Vagina (tissue), 2 donors: ENCODE measurements at regions of chr7 and their contacts with region 1.

Region 1: DNA sequence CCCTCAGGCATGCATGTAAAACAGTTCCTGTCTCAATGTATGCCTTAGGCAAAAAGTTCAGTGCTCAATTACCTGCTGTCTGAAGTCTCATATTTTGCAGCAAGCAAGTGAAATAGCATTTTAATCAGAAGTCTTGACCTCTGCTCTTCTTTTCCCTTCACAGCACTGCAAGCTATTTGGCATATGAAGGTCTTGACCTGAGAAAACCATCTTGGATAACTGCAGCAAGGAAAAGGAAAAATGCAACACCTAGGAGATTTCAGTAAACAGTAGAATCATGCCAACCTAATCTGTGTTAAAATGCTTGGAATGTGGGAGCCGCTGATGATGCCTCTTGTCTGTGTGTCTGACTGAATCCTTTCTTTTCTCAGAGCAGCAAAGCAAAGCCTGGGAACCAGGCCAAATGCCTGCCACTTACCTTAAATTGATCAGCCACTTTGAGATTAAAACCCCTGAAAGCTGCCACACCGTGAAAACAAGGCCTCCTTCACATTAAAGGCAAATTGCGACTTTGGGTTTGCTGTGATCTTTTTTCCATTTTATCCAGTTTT is 80.4 kb upstream of the CDK6 start:
- DNase-seq: no peak
- H3K4me3 ChIP-seq: no peak overlapping the region
- H3K27ac ChIP-seq: no peak overlapping the region
- H3K4me1 ChIP-seq: no peaks in the 10 kb centered on the region
- H3K27me3 ChIP-seq: no peaks in the 10 kb centered on the region
- CTCF ChIP-seq: no peak
- POLR2A ChIP-seq: no peak

Region 2: GRCh38 chr7:92854501-92855238 is 62.1 kb before region 1 on chr7:
- intact Hi-C with region 1: loop called (anchors 10 kb)
- DNase-seq: no peak
- H3K4me3 ChIP-seq: no peak overlapping the region
- H3K27ac ChIP-seq: no peak overlapping the region
- H3K4me1 ChIP-seq: no peaks in the 10 kb centered on the region
- H3K27me3 ChIP-seq: no peaks in the 10 kb centered on the region
- CTCF ChIP-seq: no peak
- POLR2A ChIP-seq: no peak